Activated T-helper 1 cell treated with anti-CD3 and anti-CD28 coated beads, Interleukin-12 subunit alpha, Interleukin-12 subunit beta, Interleukin-2, Interleukin-4 antibody, amounts not matched to agents 30 ng/mL and 10 ng/mL and 1 ng/mL, durations not matched to agents 14 hours and 24 hours and 36 hours (primary cell): ENCODE measurements at regions of chr17 and their contacts with region 1.

Region 1: DNA sequence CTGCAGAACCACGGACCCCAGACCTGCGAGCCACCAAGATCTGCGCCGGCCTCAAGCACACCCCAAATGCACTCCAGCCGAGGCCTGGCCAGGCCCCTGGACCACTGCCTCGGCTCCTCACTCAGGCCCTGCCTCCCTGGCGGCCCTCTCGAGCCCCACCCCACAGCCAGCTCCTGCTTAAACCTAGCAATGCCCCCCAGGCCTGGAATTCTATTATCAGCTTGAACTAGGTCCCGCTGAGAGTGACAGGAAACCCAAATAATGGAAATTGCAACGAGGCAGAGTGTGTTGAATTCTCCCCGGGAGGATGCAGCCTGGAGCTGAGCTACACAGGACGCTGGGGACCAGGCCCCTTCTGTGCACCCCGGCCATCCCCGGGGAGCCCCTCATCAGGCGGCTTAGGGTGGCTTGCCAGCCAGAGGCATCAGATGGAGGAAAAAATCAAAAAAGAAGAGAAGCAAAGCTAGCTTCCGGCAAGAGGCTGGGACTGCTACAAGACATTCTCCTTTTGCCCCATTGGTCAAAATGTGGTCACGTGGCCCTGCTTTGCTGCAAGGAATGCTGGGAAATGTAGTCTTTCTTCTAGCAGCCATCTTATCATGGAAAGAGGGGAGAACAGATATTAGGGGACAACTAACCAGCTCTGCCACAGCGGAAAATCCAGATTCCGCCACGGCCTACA is 2.4 kb upstream of the ENPP7 start:
- DNase-seq: peak; percentile 78
- H3K4me3 Mint-ChIP-seq: peak overlapping the region; percentile 53
- H3K27ac Mint-ChIP-seq: peak overlapping the region; percentile 70
- H3K4me1 Mint-ChIP-seq: peaks cover 7% of the 10 kb centered on the region
- H3K27me3 Mint-ChIP-seq: no peaks in the 10 kb centered on the region

Region 2: DNA sequence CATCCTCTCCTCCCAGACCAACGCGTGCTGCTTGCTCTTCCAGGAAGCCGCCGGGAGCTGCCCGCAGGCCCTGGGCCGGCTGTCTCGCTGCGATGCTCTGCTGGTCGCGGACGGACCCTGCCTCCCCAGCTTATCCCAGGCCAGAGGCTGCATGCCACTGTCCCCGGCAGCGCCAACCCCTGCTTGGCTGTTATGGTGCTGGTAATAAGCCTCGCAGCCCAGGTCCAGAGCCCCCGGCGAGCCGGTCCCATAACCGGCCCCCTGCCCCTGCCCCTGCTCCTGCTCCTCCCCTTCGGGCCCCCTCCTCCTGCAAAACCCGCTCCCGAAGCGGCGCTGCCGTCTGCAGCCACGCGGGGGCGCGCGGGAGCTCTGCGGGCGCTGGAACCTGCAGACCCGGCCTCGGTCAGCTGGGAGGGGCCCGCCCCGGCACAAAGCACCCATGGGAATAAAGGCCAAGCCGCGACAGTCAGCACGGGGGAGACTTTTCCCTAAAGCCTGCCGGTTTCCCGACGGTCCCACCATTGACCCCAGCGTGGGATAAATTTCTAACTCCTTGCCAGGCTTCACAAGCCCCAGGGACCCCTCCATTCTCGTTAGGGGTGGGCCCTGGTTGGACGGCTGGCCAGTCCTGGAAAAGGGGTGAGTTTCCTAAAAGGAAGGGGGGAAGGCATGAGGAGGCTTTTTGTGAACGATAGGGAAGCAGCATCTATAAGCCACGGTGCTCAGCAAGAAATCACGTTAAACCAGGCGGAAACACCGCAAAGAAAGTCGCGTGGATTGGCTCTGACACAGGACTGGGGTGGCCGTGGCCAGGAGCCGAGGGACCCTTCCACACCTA is 13.6 kb after region 1 on chr17:
- intact Hi-C with region 1: loop called (anchors 1 kb)
- DNase-seq: peak; percentile 71
- H3K4me3 Mint-ChIP-seq: no peak overlapping the region
- H3K27ac Mint-ChIP-seq: no peak overlapping the region
- H3K4me1 Mint-ChIP-seq: peaks cover 11% of the 10 kb centered on the region
- H3K27me3 Mint-ChIP-seq: peaks cover 27% of the 10 kb centered on the region

Region 3: DNA sequence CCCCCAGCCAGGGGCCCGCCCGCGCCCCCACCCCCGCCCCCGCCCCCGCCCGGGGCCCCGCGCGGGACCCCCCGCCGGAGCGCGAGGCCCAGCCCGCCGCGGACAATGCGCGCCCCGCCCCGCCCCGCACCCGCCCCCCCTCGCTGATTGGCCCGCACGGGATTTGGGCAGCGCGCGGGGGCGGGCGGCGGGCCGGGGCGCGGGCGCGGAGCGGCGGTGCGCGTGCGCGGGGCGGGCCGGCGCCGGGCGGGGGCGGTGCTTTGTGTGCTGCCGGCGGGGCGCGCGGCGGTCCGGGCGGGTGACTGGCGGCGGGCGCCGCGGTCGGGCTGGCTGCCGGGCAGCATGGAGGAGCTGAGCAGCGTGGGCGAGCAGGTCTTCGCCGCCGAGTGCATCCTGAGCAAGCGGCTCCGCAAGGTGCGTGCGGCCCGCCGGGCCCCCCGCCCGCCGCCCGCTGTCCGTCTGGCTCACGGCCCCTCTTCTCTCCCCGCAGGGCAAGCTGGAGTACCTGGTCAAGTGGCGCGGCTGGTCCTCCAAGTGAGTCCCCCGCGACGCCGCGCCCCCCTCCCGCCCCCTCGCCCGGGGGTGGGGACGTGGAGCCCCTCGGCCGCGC is 49.6 kb after region 1 on chr17 and contains the start of gene CBX2:
- intact Hi-C with region 1: no loop called
- DNase-seq: peak; percentile 78
- H3K4me3 Mint-ChIP-seq: peak within 1 kb of the TSS; percentile 84
- H3K27ac Mint-ChIP-seq: peak within 1 kb of the TSS; percentile 87
- H3K4me1 Mint-ChIP-seq: peaks cover 12% of the 10 kb centered on the region
- H3K27me3 Mint-ChIP-seq: peaks cover 59% of the 10 kb centered on the region
- total RNA-seq, gene CBX2: 4.7 and 5.1 TPM in 2 replicates

Region 4: DNA sequence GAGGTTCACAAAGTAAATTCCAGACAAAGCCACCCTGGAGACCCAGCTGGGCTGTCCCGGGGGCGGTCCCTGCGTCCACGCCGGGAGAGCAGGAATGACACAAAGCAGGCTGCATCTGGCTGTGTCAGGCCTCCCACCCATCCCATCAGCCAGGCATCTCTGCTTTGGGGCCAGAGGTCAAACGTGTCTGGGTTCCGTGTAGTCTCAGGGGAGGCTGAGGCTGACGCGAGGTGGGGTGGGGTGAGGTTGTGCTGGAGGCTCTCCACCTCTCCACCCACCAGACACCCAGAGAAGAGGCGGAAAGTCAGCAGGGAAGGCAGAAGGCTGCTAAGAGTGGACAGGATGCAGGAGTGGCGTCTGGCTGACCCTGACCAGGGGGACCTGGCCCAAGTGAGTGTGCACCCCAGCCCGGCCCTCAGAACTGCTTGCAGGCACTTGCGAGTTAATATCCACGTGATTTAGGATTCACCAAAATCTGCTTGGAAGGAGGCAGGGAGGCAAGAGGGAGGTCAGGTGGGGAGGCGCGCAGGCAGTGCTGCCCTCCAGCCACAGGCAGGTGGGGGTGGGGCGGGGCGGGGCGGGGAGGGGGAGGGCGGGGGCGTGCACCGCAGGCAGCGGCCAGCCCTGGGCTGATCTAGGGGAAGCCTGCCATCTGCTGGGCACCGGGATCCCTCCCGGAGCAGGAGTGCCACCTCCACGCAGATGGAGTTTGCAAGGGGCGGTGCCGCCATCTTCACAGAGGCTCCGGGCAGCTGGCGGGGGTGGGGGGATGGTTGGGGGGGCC is 263.0 kb after region 1 on chr17:
- intact Hi-C with region 1: loop called (anchors 5 kb)
- DNase-seq: peak; percentile 73
- H3K4me3 Mint-ChIP-seq: peak overlapping the region; percentile 54
- H3K27ac Mint-ChIP-seq: peak overlapping the region; percentile 29
- H3K4me1 Mint-ChIP-seq: peaks cover 24% of the 10 kb centered on the region
- H3K27me3 Mint-ChIP-seq: no peaks in the 10 kb centered on the region

Region 5: GRCh38 chr17:80005360-80006338 is 277.3 kb after region 1 on chr17:
- intact Hi-C with region 1: no loop called
- DNase-seq: peak; percentile 22
- H3K4me3 Mint-ChIP-seq: no peak overlapping the region
- H3K27ac Mint-ChIP-seq: no peak overlapping the region
- H3K4me1 Mint-ChIP-seq: no peaks in the 10 kb centered on the region
- H3K27me3 Mint-ChIP-seq: peaks cover 1% of the 10 kb centered on the region